ENCODE measurements at regions of chr17 and their contacts with region 1.

Region 1: DNA sequence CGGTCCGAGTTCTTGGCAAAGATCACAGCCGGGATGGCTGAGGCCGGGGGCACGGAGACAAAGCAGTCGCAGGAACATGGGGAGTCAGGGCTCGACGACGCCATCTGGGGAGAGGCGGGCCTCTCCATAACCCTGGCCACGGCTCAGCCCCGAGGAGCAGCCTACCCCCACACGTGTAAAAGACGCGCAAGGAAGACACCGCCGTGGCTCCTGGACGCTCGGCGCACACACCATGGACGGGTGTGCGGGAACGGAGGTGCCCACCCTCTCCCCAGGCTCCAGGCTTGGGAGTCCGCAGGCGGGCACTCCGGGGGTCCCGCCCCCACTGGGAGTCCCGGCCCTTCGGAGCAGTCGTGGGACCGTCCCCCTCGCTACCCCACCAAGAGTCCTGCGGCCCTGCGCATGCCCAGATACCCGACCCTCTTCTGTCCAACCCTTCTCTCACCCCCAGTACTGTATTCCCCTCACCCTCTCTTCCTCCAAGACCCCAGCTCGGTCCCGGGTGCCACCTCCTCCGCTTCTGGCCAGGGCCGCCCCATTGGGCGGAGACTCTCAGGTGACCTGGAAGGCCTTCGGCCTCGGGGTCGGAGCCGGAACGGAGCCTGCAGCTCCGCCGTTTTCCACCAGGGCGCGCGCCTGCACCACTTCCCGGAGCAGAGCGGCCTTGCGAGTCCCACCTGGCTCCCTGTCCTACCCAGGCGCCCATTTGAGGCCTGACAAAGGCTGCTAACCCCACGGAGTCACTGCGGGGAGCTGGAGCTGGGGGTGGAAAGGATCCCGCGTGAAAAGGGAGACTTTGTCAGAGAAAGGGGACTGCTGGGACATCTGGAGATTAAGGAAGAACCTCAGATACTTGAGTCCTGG is at the start of gene SCRN2:
- DNase-seq: peak; percentile 77 to 78 (median 77)
- H3K4me3 ChIP-seq: peak within 1 kb of the TSS; percentile 57 to 91 (median 81)
- H3K4me3 Mint-ChIP-seq: peak within 1 kb of the TSS; percentile 97 to 98
- H3K27ac ChIP-seq: peak within 1 kb of the TSS in 1 of 2 donors; percentile 61
- H3K27ac Mint-ChIP-seq: peak within 1 kb of the TSS in 6 of 7 donors; percentile 66 to 90 (median 85)
- H3K4me1 ChIP-seq: peaks cover 8 to 13% of the 10 kb centered on the region in 2 donors
- H3K4me1 Mint-ChIP-seq: peaks cover 22% of the 10 kb centered on the region
- H3K27me3 ChIP-seq: peaks cover 4 to 12% of the 10 kb centered on the region in 2 donors
- H3K27me3 Mint-ChIP-seq: peaks cover 9 to 25% (median 10%) of the 10 kb centered on the region in 3 donors
- CTCF ChIP-seq: peak; percentile 96
- polyA plus RNA-seq, gene SCRN2: 13.2 to 45.1 (median 14.5) TPM

Region 2: DNA sequence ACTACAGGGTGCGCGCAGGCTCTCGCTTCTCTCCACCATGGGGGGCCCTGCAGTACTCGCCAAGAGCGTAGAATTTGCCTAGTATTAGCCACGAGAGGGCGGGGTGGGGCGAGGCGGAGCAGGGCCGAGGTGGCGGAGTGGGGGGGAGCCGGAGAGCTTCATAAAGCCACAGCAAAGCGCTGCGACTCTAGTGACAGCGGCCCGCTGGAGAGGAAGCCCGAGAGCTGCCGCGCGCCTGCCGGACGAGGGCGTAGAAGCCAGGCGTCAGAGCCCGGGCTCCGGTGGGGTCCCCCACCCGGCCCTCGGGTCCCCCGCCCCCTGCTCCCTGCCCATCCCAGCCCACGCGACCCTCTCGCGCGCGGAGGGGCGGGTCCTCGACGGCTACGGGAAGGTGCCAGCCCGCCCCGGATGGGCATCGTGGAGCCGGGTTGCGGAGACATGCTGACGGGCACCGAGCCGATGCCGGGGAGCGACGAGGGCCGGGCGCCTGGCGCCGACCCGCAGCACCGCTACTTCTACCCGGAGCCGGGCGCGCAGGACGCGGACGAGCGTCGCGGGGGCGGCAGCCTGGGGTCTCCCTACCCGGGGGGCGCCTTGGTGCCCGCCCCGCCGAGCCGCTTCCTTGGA is 107.8 kb before region 1 on chr17 and contains the start of gene TBX21:
- intact Hi-C with region 1: no loop called
- DNase-seq: peak; percentile 42 to 64 (median 43)
- H3K4me3 ChIP-seq: peak within 1 kb of the TSS in 1 of 3 experiments; percentile 51
- H3K4me3 Mint-ChIP-seq: peak within 1 kb of the TSS; percentile 74 to 94
- H3K27ac ChIP-seq: no peak within 1 kb of the TSS
- H3K27ac Mint-ChIP-seq: peak within 1 kb of the TSS in 2 of 7 donors; percentile 31 to 73
- H3K4me1 ChIP-seq: peaks cover 5 to 13% of the 10 kb centered on the region in 2 donors
- H3K4me1 Mint-ChIP-seq: peaks cover 12% of the 10 kb centered on the region
- H3K27me3 ChIP-seq: peaks cover 18 to 51% of the 10 kb centered on the region in 2 donors
- H3K27me3 Mint-ChIP-seq: peaks cover 56 to 70% (median 56%) of the 10 kb centered on the region in 3 donors
- CTCF ChIP-seq: no peak
- polyA plus RNA-seq, gene TBX21: 0.05 to 0.16 (median 0.13) TPM

Region 3: GRCh38 chr17:47802341-47803022 is 38.5 kb before region 1 on chr17:
- intact Hi-C with region 1: no loop called
- DNase-seq: peak in 2 of 3 donors; percentile 6 to 8
- H3K4me3 ChIP-seq: no peak overlapping the region
- H3K4me3 Mint-ChIP-seq: no peak overlapping the region
- H3K27ac ChIP-seq: no peak overlapping the region
- H3K27ac Mint-ChIP-seq: no peak overlapping the region
- H3K4me1 ChIP-seq: no peaks in the 10 kb centered on the region
- H3K4me1 Mint-ChIP-seq: no peaks in the 10 kb centered on the region
- H3K27me3 ChIP-seq: no peaks in the 10 kb centered on the region
- H3K27me3 Mint-ChIP-seq: peaks cover 8 to 14% (median 10%) of the 10 kb centered on the region in 3 donors
- CTCF ChIP-seq: peak; percentile 70

Region 4: DNA sequence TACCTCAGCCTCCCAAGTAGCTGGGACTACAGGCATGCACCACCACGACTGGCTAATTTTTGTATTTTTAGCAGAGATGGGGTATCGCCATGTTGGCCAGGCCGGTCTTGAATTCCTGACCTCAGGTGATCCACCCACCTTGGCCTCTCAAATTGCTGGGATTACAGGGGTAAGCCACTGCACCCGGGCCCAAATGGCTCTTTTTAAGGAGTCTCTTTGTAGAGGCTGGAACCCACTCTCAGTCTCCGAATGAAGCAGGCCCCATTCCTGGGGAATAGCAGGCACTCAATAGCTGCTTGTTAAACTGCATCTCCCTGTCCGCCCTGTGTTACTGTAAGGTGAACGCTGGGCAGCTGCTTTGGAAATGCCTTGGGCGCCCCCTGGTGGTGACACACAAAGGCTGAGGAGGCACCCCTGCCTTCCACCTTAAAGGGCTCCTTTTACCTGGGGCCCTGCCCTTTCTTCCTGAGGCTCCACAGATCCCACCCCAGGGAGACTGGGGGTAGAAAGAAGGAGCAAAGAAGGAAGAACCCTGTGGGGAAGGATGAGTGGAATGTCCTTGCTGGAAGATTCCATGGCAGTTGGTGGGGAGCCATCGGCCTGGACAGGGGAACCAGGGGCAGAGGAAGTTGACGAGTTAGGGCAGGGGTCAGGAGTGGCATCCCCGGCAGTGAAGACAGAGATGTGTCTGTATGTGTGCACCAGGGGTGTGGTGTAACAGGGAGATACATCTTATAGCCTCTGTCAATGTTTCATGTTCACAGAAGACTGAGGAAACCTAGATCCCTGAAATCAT is 49.0 kb after region 1 on chr17:
- intact Hi-C with region 1: loop called (anchors 1 to 2 kb)
- DNase-seq: peak; percentile 73 to 78 (median 76)
- H3K4me3 ChIP-seq: no peak overlapping the region
- H3K4me3 Mint-ChIP-seq: no peak overlapping the region
- H3K27ac ChIP-seq: no peak overlapping the region
- H3K27ac Mint-ChIP-seq: peak overlapping the region in 1 of 7 donors; percentile 38
- H3K4me1 ChIP-seq: peaks cover 3 to 28% of the 10 kb centered on the region in 2 donors
- H3K4me1 Mint-ChIP-seq: peaks cover 19% of the 10 kb centered on the region
- H3K27me3 ChIP-seq: no peaks in the 10 kb centered on the region
- H3K27me3 Mint-ChIP-seq: no peaks in the 10 kb centered on the region
- CTCF ChIP-seq: peak; percentile 96

Region 5: DNA sequence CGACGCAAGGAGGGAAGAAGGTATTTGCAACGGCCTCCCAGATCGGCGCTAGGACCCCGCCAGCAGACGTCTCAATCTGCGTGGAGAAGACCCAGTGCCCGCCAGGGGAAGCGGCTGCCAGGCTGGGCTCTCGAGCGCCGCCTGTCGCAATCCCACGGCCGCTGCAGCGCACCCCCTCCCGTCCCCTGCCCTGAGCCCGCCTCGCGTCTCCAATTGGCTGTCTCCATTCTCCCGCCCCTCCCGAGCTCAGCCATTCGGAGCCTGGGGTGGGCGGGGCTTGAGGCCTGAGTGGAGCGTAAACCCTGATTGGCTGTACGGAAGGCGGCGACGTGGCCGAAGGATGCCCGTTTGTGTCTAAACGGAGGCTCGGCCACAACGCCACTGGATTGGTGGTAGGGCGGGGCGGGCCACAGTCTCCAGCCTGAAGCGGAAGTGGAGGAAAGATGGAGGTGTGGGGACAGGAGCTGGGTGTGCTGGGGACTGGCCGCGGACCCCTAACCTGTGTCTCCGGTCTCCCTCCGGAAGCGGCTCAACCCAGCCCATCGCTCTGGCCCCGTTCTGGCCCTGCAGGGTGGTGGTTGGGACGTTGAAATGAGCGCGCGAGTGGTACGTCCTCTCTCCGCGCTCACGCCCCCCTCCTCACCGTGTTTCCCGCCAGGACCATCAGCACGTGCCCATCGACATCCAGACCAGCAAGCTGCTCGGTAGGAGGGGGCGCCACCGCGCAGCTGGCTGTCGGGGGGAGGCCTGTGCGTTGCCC is 129.9 kb after region 1 on chr17 and contains the start of gene CDK5RAP3:
- intact Hi-C with region 1: loop called in 1 of 2 experiments (anchors 5 kb)
- DNase-seq: peak; percentile 98 to 100 (median 99)
- H3K4me3 ChIP-seq: peak within 1 kb of the TSS; percentile 63 to 99 (median 98)
- H3K4me3 Mint-ChIP-seq: peak within 1 kb of the TSS; percentile 91 to 94
- H3K27ac ChIP-seq: peak within 1 kb of the TSS; percentile 43 to 85
- H3K27ac Mint-ChIP-seq: peak within 1 kb of the TSS; percentile 75 to 95 (median 88)
- H3K4me1 ChIP-seq: peaks cover 20 to 22% of the 10 kb centered on the region in 2 donors
- H3K4me1 Mint-ChIP-seq: peaks cover 23% of the 10 kb centered on the region
- H3K27me3 ChIP-seq: no peaks in the 10 kb centered on the region
- H3K27me3 Mint-ChIP-seq: peaks cover 2% of the 10 kb centered on the region in 3 donors
- CTCF ChIP-seq: peak; percentile 97
- polyA plus RNA-seq, gene CDK5RAP3: 86.1 to 782 (median 94.4) TPM

Region 6: DNA sequence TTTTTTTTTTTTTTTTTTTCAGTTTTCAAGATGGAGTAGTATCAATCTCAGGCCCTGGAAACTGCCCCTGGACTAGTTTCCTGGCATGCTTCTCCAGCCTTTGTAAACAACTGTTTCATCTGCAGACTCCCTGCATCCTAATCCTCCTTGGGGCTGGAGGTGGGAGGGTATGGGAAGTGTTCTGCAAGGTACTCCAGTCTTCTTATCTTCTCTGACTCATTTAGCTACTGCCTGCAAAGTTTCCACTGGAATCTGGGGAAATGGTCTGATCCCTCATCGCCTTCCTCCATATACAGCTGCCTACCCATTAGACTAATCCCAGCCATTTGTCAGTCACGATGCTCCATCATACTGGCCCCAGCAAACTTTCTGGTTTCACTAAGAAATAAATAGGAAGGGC is 175.1 kb after region 1 on chr17:
- intact Hi-C with region 1: loop called in 1 of 2 experiments (anchors 5 kb)
- DNase-seq: no peak
- H3K4me3 ChIP-seq: no peak overlapping the region
- H3K4me3 Mint-ChIP-seq: no peak overlapping the region
- H3K27ac ChIP-seq: no peak overlapping the region
- H3K27ac Mint-ChIP-seq: peak overlapping the region in 1 of 7 donors; percentile 82
- H3K4me1 ChIP-seq: peaks cover 30 to 56% of the 10 kb centered on the region in 2 donors
- H3K4me1 Mint-ChIP-seq: peaks cover 52% of the 10 kb centered on the region
- H3K27me3 ChIP-seq: peaks cover 4 to 26% of the 10 kb centered on the region in 2 donors
- H3K27me3 Mint-ChIP-seq: peaks cover 31 to 39% (median 32%) of the 10 kb centered on the region in 3 donors
- CTCF ChIP-seq: no peak

Measured in CD14-positive monocyte (primary cell).